CD4-positive, alpha-beta memory T cell (primary cell): ENCODE measurements at regions of chr17 and their contacts with region 1.

Region 1: DNA sequence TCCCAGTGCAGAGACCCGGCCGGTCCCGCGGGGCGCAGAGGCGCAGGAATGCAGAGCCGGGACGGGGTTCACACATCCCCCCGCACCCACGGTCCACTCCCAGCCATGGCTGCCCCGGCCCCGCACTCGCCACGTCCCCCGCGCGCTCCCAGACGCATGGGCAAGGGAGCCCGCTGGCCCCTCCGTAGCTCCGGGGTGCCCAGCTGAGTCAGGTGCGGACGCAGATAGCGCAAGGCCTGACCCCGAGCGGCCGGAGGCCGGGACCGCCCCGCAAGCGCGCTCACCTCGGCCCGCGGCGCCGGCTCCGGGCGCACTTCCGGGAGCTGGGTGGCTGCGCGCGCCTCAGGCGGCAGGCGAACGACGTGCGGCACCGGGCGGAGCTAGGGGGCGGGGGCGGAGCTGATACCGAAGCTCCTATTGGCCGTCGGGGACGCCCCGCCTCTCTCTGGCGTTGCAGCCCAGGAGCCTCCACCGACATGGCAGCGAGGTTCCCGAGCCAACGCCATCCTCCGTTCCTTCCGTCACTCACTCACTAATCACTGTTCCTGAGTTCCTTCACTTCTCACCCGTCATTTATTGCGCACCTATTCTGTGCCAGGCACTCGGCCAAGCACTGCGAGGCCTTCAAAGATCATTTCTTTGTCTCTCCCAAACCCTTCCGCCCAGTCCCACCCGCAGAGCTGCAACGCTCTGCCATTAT is at the start of gene ZNF18:
- DNase-seq: peak; percentile 92 to 95 (median 93)
- H3K4me3 ChIP-seq: peak within 1 kb of the TSS; percentile 80 to 95
- H3K4me3 Mint-ChIP-seq: peak within 1 kb of the TSS; percentile 91 to 99 (median 98)
- H3K27ac ChIP-seq: peak within 1 kb of the TSS; percentile 93
- H3K27ac Mint-ChIP-seq: peak within 1 kb of the TSS; percentile 83 to 99 (median 95)
- H3K4me1 ChIP-seq: peaks cover 13% of the 10 kb centered on the region
- H3K4me1 Mint-ChIP-seq: peaks cover 15 to 36% (median 23%) of the 10 kb centered on the region in 4 donors
- H3K27me3 ChIP-seq: no peaks in the 10 kb centered on the region
- H3K27me3 Mint-ChIP-seq: no peaks in the 10 kb centered on the region
- total RNA-seq, gene ZNF18: 12.7 to 14.4 TPM

Region 2: DNA sequence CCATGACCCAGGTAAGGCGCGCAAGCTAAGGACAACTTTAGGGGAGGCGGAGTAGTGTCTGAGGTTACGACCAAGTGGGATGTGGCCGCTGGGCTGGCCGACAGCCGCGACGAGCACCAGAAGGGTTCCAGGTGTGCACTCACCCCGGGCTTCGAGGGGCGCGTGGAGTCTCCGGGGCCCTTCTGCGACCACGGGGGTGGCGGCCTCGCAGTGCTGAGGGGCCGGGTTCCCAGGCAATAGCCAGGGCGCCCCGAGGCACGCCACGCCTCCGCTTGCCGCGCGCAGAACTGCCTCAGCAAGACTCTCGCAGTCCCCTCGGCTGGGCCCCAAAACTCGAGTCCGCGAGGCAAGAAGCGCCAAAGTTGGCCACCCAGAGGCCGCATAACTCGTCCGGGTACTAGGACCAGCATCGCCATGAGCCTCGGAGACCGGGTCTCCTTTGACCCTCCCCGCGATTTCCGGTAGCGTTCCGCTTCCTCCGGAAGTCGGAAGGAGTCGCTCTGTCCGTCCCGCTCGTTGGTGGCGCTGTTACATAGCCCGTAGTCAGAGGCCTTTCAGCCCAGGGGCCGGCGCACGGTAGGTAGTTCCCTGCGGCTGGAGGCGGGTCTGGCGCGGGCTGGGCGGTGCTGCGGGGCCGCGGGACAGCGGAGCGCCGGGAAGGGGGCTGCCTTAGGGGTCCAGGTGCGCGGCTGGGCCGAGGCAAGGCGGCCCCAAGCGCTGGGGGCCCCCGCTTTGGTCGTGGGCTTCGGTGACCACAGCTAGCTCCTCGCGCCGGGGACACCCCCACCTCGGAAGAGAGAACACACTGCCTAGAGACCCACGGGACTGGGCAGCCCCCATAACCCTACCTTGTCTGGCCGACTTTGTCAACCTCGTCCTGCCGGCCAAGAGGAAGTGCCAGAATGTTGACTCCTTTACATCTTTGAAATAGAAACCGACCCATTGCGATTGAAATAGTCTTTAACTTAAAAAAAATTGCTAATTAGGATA is 1299.9 kb before region 1 on chr17 and contains the starts of genes ADPRM and SCO1:
- CTCF ChIA-PET with region 1: no interaction called
- POLR2A ChIA-PET with region 1: interaction called, 5 read pairs
- intact Hi-C with region 1: loop called (anchors 5 kb)
- DNase-seq: peak; percentile 86 to 91 (median 87)
- H3K4me3 ChIP-seq: peak within 1 kb of the TSS; percentile 80 to 95
- H3K4me3 Mint-ChIP-seq: peak within 1 kb of the TSS; percentile 91 to 98 (median 97)
- H3K27ac ChIP-seq: peak within 1 kb of the TSS; percentile 96
- H3K27ac Mint-ChIP-seq: peak within 1 kb of the TSS; percentile 91 to 98 (median 94)
- H3K4me1 ChIP-seq: peaks cover 55% of the 10 kb centered on the region
- H3K4me1 Mint-ChIP-seq: peaks cover 37 to 71% (median 54%) of the 10 kb centered on the region in 4 donors
- H3K27me3 ChIP-seq: no peaks in the 10 kb centered on the region
- H3K27me3 Mint-ChIP-seq: no peaks in the 10 kb centered on the region
- total RNA-seq, gene ADPRM: 45.5 to 46.7 TPM
- total RNA-seq, gene SCO1: 26.0 to 26.1 TPM

Region 3: DNA sequence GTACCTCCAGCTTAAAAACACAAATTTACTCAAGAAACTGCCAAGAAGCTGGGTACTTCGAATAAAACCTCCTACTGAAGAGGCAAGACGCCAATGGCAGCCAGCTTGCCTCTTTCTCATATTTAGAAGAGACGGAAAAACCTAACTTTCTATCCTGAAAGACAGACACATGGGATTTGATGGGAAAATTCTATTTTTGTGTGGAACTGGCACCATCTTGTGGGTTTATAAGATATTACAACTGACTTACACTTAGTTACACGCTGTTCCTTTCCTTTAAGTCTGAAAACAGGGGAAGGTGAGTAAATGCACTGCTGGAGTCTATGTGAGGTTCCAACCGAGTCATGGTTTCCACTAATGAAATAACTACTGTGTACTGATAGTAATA is 10.4 kb before region 1 on chr17:
- CTCF ChIA-PET with region 1: interaction called, 16 read pairs
- POLR2A ChIA-PET with region 1: interaction called, 9 read pairs
- intact Hi-C with region 1: no loop called
- DNase-seq: no peak
- H3K4me3 ChIP-seq: no peak overlapping the region
- H3K4me3 Mint-ChIP-seq: no peak overlapping the region
- H3K27ac ChIP-seq: no peak overlapping the region
- H3K27ac Mint-ChIP-seq: no peak overlapping the region
- H3K4me1 ChIP-seq: no peaks in the 10 kb centered on the region
- H3K4me1 Mint-ChIP-seq: peaks cover 13 to 25% (median 19%) of the 10 kb centered on the region in 4 donors
- H3K27me3 ChIP-seq: no peaks in the 10 kb centered on the region
- H3K27me3 Mint-ChIP-seq: no peaks in the 10 kb centered on the region

Region 4: GRCh38 chr17:12007466-12007865 is 10.2 kb after region 1 on chr17:
- CTCF ChIA-PET with region 1: interaction called, 10 read pairs
- POLR2A ChIA-PET with region 1: interaction called, 29 read pairs
- intact Hi-C with region 1: no loop called
- DNase-seq: no peak
- H3K4me3 ChIP-seq: no peak overlapping the region
- H3K4me3 Mint-ChIP-seq: no peak overlapping the region
- H3K27ac ChIP-seq: no peak overlapping the region
- H3K27ac Mint-ChIP-seq: no peak overlapping the region
- H3K4me1 ChIP-seq: no peaks in the 10 kb centered on the region
- H3K4me1 Mint-ChIP-seq: no peaks in the 10 kb centered on the region
- H3K27me3 ChIP-seq: no peaks in the 10 kb centered on the region
- H3K27me3 Mint-ChIP-seq: peaks cover 5% of the 10 kb centered on the region in 2 donors

Region 5: GRCh38 chr17:12020642-12021622 is 23.6 kb after region 1 on chr17 and contains the start of gene MAP2K4:
- CTCF ChIA-PET with region 1: interaction called, 16 read pairs
- POLR2A ChIA-PET with region 1: interaction called, 287 read pairs
- intact Hi-C with region 1: loop called (anchors 1 kb)
- DNase-seq: peak; percentile 91 to 97 (median 93)
- H3K4me3 ChIP-seq: peak within 1 kb of the TSS; percentile 50 to 56
- H3K4me3 Mint-ChIP-seq: peak within 1 kb of the TSS; percentile 79 to 89 (median 85)
- H3K27ac ChIP-seq: peak within 1 kb of the TSS; percentile 73
- H3K27ac Mint-ChIP-seq: peak within 1 kb of the TSS; percentile 73 to 91 (median 86)
- H3K4me1 ChIP-seq: peaks cover 45% of the 10 kb centered on the region
- H3K4me1 Mint-ChIP-seq: peaks cover 33 to 56% (median 39%) of the 10 kb centered on the region in 4 donors
- H3K27me3 ChIP-seq: no peaks in the 10 kb centered on the region
- H3K27me3 Mint-ChIP-seq: no peaks in the 10 kb centered on the region
- total RNA-seq, gene MAP2K4: 35.3 to 41.3 TPM

Region 6: GRCh38 chr17:13017659-13018459 is 1020.6 kb after region 1 on chr17 and contains the start of gene ELAC2:
- CTCF ChIA-PET with region 1: no interaction called
- POLR2A ChIA-PET with region 1: interaction called, 11 read pairs
- intact Hi-C with region 1: no loop called
- DNase-seq: peak; percentile 96 to 98 (median 96)
- H3K4me3 ChIP-seq: peak within 1 kb of the TSS; percentile 77 to 94
- H3K4me3 Mint-ChIP-seq: peak within 1 kb of the TSS; percentile 95 to 100 (median 98)
- H3K27ac ChIP-seq: peak within 1 kb of the TSS; percentile 73
- H3K27ac Mint-ChIP-seq: peak within 1 kb of the TSS; percentile 94 to 98 (median 97)
- H3K4me1 ChIP-seq: peaks cover 18% of the 10 kb centered on the region
- H3K4me1 Mint-ChIP-seq: peaks cover 15 to 44% (median 32%) of the 10 kb centered on the region in 4 donors
- H3K27me3 ChIP-seq: no peaks in the 10 kb centered on the region
- H3K27me3 Mint-ChIP-seq: no peaks in the 10 kb centered on the region
- total RNA-seq, gene ELAC2: 65.8 to 73.2 TPM